ENCODE measurements at regions of chr14 and their contacts with region 1.

Region 1: GRCh38 chr14:73458151-73458976 is at the start of gene NUMB:
- H3K4me3 Mint-ChIP-seq: peak within 1 kb of the TSS; percentile 92
- H3K27ac Mint-ChIP-seq: peak within 1 kb of the TSS; percentile 99
- H3K4me1 Mint-ChIP-seq: peaks cover 68% of the 10 kb centered on the region
- H3K27me3 Mint-ChIP-seq: peaks cover 7% of the 10 kb centered on the region

Region 2: GRCh38 chr14:73058224-73058921 is 400.0 kb before region 1 on chr14 and contains the start of gene RBM25:
- intact Hi-C with region 1: no loop called
- H3K4me3 Mint-ChIP-seq: no peak within 1 kb of the TSS
- H3K27ac Mint-ChIP-seq: no peak within 1 kb of the TSS
- H3K4me1 Mint-ChIP-seq: peaks cover 13% of the 10 kb centered on the region
- H3K27me3 Mint-ChIP-seq: no peaks in the 10 kb centered on the region

Region 3: DNA sequence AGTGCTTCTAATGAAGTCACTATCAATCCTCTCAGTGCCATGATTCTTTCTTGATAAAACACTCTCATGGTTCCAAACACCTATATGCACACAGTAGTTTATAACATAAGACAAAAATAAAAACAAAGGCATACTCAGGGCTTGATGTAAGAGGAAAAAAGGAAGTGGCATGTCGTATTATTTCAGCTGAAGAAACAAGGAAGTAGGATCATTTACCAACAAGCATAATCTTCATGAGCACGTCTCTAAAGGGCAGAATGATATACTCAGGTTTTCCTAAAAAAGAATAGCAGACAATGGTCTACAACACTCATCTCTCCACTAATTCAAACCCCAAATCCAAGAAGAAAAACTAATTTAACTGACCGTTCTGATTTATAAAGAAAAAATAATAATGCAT is 33.9 kb before region 1 on chr14:
- intact Hi-C with region 1: loop called (anchors 5 kb)
- H3K4me3 Mint-ChIP-seq: peak overlapping the region; percentile 48
- H3K27ac Mint-ChIP-seq: peak overlapping the region; percentile 86
- H3K4me1 Mint-ChIP-seq: peaks cover 50% of the 10 kb centered on the region
- H3K27me3 Mint-ChIP-seq: no peaks in the 10 kb centered on the region

Measured in dendritic cell treated with granulocyte-macrophage colony-stimulating factor and Interleukin-4, amounts not matched to agents 40 ng/mL and 50 ng/mL, for 4 days (primary cell).